CD4-positive, alpha-beta T cell (primary cell): ENCODE measurements at regions of chr16 and their contacts with region 1.

Region 1: GRCh38 chr16:30557957-30558788 is at the start of gene ZNF764:
- DNase-seq: peak; percentile 90 to 99 (median 95)
- ATAC-seq: peak; percentile 89
- H3K4me3 ChIP-seq: peak within 1 kb of the TSS; percentile 73
- H3K4me3 Mint-ChIP-seq: peak within 1 kb of the TSS; percentile 93
- H3K27ac ChIP-seq: peak within 1 kb of the TSS; percentile 93 to 94
- H3K27ac Mint-ChIP-seq: peak within 1 kb of the TSS; percentile 94
- H3K4me1 ChIP-seq: peaks cover 68% of the 10 kb centered on the region
- H3K4me1 Mint-ChIP-seq: peaks cover 41% of the 10 kb centered on the region
- H3K27me3 ChIP-seq: no peaks in the 10 kb centered on the region
- H3K27me3 Mint-ChIP-seq: no peaks in the 10 kb centered on the region
- CTCF ChIP-seq: no peak
- total RNA-seq, gene ZNF764: 20.4 to 22.9 TPM

Region 2: DNA sequence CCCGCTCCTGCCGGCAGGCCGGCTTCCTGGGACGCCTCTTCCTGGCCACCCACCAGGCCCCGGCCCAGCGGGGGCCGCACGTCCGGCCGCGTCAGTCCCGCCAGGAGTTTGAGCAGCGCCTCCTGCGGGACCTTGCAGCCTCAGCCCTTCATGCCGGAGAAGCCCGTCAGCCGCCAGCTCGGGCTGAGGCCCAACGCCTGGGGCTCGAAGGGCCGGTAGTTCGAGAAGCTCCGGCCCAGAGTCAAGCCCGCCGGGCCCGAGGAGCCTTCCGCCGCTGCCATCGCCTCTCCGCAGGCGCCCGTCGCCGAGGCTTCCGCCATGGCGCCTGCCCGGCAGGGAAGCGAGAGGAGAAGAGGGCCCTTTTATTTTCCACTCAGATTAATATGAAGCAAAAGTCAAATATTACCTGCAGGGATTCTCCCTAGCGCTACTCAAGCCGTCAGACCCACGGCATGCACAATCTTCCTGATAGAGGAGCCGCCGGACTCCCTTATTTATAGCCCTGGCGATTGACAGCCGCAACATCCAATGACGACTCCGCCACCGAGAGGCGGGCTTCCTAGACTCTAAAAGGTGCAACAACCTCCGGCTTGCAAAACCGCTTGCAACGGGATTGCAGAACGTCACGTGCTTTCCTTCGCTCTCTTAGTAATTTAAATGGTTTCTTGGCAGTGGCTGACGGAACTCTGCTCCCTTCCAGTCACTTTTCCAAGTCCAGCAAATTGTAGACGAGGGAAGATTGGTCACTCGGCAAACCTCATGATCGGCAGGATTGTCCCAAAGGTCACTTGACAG is 112.6 kb before region 1 on chr16 and contains the start of gene SEPHS2:
- CTCF ChIA-PET with region 1: no interaction called
- POLR2A ChIA-PET with region 1: interaction called, 8 read pairs
- intact Hi-C with region 1: loop called in 1 of 2 experiments (anchors 5 kb)
- DNase-seq: peak; percentile 93 to 98 (median 96)
- ATAC-seq: peak; percentile 97
- H3K4me3 ChIP-seq: peak within 1 kb of the TSS; percentile 83
- H3K4me3 Mint-ChIP-seq: peak within 1 kb of the TSS; percentile 96
- H3K27ac ChIP-seq: peak within 1 kb of the TSS; percentile 76 to 88
- H3K27ac Mint-ChIP-seq: peak within 1 kb of the TSS; percentile 89
- H3K4me1 ChIP-seq: peaks cover 37% of the 10 kb centered on the region
- H3K4me1 Mint-ChIP-seq: peaks cover 44% of the 10 kb centered on the region
- H3K27me3 ChIP-seq: no peaks in the 10 kb centered on the region
- H3K27me3 Mint-ChIP-seq: no peaks in the 10 kb centered on the region
- CTCF ChIP-seq: peak; percentile 16
- total RNA-seq, gene SEPHS2: 25.4 to 25.9 TPM

Region 3: DNA sequence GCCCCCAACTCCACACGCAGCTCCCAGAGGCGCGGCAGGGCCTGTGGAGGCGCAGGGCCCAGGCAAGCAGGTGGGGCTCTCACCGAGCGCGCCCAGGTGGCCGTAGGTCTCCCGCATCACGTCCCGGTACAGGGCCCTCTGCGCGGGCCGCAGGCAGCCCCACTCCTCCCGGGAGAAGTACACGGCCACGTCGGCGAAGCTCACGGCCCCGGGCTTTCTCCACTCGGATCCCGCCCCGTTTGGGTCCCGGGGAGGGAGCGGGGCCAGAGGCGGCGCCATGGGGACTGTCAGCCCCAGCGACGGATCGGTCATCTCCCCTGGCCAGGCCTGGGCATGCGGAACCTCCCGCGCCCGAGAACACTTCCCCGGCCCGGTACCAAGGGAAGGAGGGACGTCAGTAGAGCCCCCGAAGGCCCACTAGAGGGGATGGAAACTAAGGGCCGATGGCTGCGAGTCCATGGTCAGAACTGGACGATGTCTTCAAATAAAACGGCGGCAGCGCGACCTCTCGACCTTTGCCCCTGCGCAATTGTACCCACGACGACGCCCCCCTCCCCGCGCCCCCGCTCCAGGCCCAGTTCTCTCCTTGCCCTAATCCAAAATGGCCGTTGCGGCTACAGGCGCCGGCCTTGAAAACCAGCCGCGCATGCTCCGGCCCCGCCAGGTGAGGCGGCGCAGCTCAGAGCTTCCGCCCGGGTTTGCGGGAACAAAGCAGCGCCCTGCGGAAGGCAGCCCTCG is 23.6 kb before region 1 on chr16 and contains the start of gene ZNF747:
- CTCF ChIA-PET with region 1: interaction called, 68 read pairs
- POLR2A ChIA-PET with region 1: interaction called, 116 read pairs
- intact Hi-C with region 1: loop called (anchors 1 kb)
- DNase-seq: peak; percentile 88 to 95 (median 92)
- ATAC-seq: peak; percentile 80
- H3K4me3 ChIP-seq: peak within 1 kb of the TSS; percentile 87
- H3K4me3 Mint-ChIP-seq: peak within 1 kb of the TSS; percentile 94
- H3K27ac ChIP-seq: peak within 1 kb of the TSS; percentile 85 to 96
- H3K27ac Mint-ChIP-seq: peak within 1 kb of the TSS; percentile 99
- H3K4me1 ChIP-seq: peaks cover 52% of the 10 kb centered on the region
- H3K4me1 Mint-ChIP-seq: peaks cover 43% of the 10 kb centered on the region
- H3K27me3 ChIP-seq: no peaks in the 10 kb centered on the region
- H3K27me3 Mint-ChIP-seq: no peaks in the 10 kb centered on the region
- CTCF ChIP-seq: no peak
- total RNA-seq, gene ZNF747: 6.3 to 6.7 TPM

Region 4: DNA sequence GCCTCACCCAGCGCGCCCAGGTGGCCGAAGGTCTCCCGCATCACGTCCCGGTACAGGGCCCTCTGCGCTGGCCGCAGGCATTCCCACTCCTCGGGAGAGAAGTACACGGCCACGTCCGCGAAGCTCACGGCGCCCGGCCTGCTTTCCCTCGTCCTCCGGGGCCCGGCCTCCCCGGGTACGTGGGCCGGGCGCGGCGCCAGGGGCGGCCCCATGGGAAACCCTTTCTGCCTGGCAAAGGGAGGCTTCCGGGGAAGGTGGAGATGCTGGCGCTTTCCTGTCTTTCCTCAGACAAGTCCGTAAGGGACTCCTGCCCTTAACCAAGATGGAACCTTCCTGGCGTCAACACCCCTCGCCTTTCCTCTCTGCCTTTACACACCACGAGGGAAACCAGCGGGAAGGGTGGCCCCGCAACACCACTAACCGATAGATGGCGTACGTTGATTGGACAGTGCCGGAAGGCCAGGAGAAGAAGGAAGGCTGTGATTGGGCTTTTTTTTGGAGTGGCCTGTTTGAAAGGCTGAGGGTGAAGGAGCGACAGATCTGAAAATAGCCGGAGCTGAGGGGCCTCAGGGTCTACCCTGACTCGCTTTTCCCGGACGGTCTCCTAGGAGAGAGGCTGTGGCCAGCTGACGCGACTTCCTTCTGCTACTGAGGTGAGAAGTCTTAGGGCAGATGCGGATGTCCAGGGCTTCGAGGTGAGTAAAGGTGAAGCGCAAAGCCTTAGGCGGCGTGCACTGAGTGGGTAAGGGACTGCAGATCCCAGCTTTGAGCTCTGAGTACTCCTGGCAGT is 27.4 kb after region 1 on chr16 and contains the start of gene ZNF785:
- CTCF ChIA-PET with region 1: interaction called, 7 read pairs
- POLR2A ChIA-PET with region 1: interaction called, 26 read pairs
- intact Hi-C with region 1: loop called in 1 of 2 experiments (anchors 1 kb)
- DNase-seq: peak; percentile 81 to 97 (median 87)
- ATAC-seq: peak; percentile 99
- H3K4me3 ChIP-seq: peak within 1 kb of the TSS; percentile 64
- H3K4me3 Mint-ChIP-seq: peak within 1 kb of the TSS; percentile 92
- H3K27ac ChIP-seq: peak within 1 kb of the TSS; percentile 53 to 57
- H3K27ac Mint-ChIP-seq: peak within 1 kb of the TSS; percentile 93
- H3K4me1 ChIP-seq: peaks cover 26% of the 10 kb centered on the region
- H3K4me1 Mint-ChIP-seq: peaks cover 18% of the 10 kb centered on the region
- H3K27me3 ChIP-seq: no peaks in the 10 kb centered on the region
- H3K27me3 Mint-ChIP-seq: no peaks in the 10 kb centered on the region
- CTCF ChIP-seq: no peak
- total RNA-seq, gene ZNF785: 6.6 to 7.7 TPM

Region 5: DNA sequence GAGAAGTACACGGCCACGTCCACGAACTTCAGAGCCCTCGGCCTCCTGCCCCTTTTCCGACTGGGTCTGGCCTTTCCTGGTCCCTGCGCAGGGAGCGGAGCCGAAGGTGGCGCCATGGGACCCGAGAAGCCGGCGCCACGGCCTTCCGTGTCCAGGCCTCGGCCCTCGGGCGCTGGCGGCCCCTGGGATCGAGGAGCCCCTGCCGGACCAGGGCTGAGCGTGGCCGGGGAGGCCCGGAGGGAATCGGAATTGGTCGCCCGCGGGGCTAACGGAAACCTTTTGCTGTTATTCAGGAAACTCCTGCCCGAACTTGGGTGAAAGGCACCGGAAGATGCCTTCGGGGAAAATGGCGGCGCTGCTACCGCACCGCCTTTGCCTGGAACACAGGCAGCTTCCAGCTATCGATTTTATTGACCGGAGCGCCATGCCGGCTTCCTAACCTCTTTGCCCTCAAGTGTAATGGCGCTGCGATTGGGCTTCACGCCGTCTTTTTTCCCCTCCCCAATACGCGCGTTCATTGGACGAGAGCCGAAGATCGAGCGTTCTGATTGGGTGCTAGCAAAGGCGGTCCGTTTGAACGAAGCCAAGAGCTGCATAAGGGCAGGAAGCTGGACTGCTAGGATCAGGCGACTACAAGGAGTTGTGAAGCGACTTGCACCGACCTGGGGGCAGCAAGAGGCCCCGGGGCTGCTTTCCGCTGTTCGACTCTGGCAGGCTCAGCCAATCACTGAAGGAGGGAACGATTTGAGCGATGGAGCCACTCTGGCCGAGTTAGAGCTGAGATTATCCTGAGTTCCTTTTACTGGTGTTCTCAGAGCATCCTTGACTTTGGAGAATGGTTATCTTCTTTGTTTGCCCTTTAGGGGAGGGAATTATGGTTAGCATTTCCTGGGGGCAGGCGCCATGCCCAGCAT is 52.0 kb after region 1 on chr16 and contains the start of gene ZNF689:
- CTCF ChIA-PET with region 1: interaction called, 3 read pairs
- POLR2A ChIA-PET with region 1: interaction called, 16 read pairs
- intact Hi-C with region 1: no loop called
- DNase-seq: peak; percentile 88 to 97 (median 94)
- ATAC-seq: peak; percentile 92
- H3K4me3 ChIP-seq: peak within 1 kb of the TSS; percentile 74
- H3K4me3 Mint-ChIP-seq: peak within 1 kb of the TSS; percentile 91
- H3K27ac ChIP-seq: peak within 1 kb of the TSS; percentile 86 to 89
- H3K27ac Mint-ChIP-seq: peak within 1 kb of the TSS; percentile 93
- H3K4me1 ChIP-seq: peaks cover 26% of the 10 kb centered on the region
- H3K4me1 Mint-ChIP-seq: peaks cover 23% of the 10 kb centered on the region
- H3K27me3 ChIP-seq: no peaks in the 10 kb centered on the region
- H3K27me3 Mint-ChIP-seq: no peaks in the 10 kb centered on the region
- CTCF ChIP-seq: no peak
- total RNA-seq, gene ZNF689: 15.3 to 15.7 TPM

Region 6: GRCh38 chr16:30650369-30651123 is 92.4 kb after region 1 on chr16 and contains the start of gene PRR14:
- CTCF ChIA-PET with region 1: interaction called, 6 read pairs
- POLR2A ChIA-PET with region 1: interaction called, 20 read pairs
- intact Hi-C with region 1: loop called (anchors 1 kb)
- DNase-seq: peak; percentile 96 to 99 (median 98)
- ATAC-seq: peak; percentile 89
- H3K4me3 ChIP-seq: peak within 1 kb of the TSS; percentile 86
- H3K4me3 Mint-ChIP-seq: peak within 1 kb of the TSS; percentile 99
- H3K27ac ChIP-seq: peak within 1 kb of the TSS; percentile 84 to 96
- H3K27ac Mint-ChIP-seq: peak within 1 kb of the TSS; percentile 95
- H3K4me1 ChIP-seq: peaks cover 30% of the 10 kb centered on the region
- H3K4me1 Mint-ChIP-seq: peaks cover 22% of the 10 kb centered on the region
- H3K27me3 ChIP-seq: no peaks in the 10 kb centered on the region
- H3K27me3 Mint-ChIP-seq: no peaks in the 10 kb centered on the region
- CTCF ChIP-seq: no peak
- total RNA-seq, gene PRR14: 50.2 to 51.7 TPM